Astrocyte of the cerebellum (primary cell): ENCODE measurements at regions of chr10 and their contacts with region 1.

Region 1: GRCh38 chr10:7529638-7530037 is 118.8 kb upstream of the SFMBT2 start:
- DNase-seq: no peak
- H3K4me3 ChIP-seq: no peak overlapping the region
- CTCF ChIP-seq: no peak

Region 2: GRCh38 chr10:7572391-7572790 is 42.8 kb after region 1 on chr10:
- in situ Hi-C with region 1: no loop called
- DNase-seq: no peak
- H3K4me3 ChIP-seq: no peak overlapping the region
- CTCF ChIP-seq: no peak

Region 3: DNA sequence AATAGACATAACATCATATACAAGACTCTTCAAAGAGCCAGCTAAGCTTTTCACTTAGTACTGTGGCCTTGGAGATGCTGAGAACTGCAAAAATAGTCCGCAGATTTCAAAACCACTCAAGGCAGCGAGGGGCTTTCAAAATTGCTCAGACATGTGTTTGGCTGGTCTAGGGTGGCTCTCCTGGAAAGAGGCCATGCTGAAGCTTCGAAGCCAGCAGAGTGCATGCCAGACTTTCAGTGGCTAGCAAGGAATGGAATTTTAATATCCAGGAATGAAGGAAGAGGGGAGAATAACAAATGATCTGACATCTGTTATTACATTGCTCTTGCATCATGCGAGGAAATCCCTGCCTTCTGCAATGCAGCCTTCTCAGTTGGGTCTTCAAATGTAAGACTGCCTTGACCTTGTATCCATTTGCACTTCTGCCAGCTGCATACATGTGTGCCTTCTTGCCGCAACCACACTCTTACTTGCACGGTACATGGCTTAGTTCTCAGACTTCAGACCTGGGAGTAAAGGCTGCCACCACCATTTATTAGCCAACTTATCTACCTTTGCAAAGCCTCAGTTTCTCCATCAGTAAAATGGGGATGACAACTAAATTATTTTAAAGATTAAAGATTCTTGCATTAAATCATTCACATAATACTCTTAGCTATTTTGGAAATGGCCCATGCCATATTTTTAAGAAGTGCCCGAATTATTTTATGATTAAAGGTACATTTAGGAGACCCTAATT is 81.2 kb after region 1 on chr10:
- in situ Hi-C with region 1: no loop called
- DNase-seq: peak; percentile 55
- H3K4me3 ChIP-seq: no peak overlapping the region
- CTCF ChIP-seq: no peak

Region 4: GRCh38 chr10:7696545-7696944 is 166.9 kb after region 1 on chr10:
- in situ Hi-C with region 1: loop called (anchors 5 kb)
- DNase-seq: peak; percentile 5
- H3K4me3 ChIP-seq: no peak overlapping the region
- CTCF ChIP-seq: no peak

Region 5: GRCh38 chr10:7750222-7750621 is 220.6 kb after region 1 on chr10:
- in situ Hi-C with region 1: loop called (anchors 5 kb)
- DNase-seq: no peak
- H3K4me3 ChIP-seq: no peak overlapping the region
- CTCF ChIP-seq: no peak